ENCODE measurements at regions of chr3 and their contacts with region 1.

Region 1: GRCh38 chr3:148861277-148861869 is 3.7 kb upstream of the CPA3 start:
- DNase-seq: no peak
- H3K4me3 Mint-ChIP-seq: no peak overlapping the region
- H3K27ac Mint-ChIP-seq: no peak overlapping the region
- H3K4me1 Mint-ChIP-seq: no peaks in the 10 kb centered on the region
- H3K27me3 Mint-ChIP-seq: peaks cover 19% of the 10 kb centered on the region

Region 2: DNA sequence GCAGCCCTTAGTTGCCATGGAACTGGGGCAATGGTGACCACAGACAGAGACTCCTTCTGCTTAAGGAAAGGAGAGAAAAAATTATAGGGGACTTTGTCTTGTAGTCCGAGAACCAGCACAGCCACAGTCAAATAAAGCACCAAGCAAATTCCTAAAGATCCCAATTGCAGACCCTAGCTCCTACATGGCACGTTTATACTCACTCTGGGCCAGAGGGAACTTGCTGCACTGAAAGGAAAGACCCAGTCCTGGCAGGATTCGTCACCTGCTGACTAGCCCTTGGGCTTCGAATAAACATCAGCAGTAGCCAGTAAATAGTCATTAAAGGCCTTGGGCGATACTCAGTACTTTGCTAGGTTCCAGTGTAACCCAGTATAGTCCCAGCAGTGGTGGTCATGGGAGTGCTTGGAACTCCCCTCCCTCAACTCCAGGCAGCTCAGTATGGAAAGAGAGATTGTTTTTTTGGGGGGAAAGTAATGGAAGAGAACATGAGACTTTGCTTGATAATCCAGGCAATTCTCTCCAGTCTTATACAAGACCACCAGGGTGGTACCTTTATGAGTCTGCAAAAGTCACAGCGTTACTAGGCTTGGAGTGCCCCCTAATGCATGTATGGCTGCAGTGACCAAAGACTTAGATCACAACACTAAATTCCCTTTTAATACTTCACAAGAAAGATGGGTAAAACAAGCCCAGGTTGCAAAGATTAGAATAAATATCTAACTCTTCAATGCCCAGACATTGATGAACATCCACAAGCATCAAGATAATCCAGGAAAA is 230.1 kb before region 1 on chr3:
- CTCF ChIA-PET with region 1: no interaction called
- DNase-seq: no peak
- H3K4me3 Mint-ChIP-seq: no peak overlapping the region
- H3K27ac Mint-ChIP-seq: no peak overlapping the region
- H3K4me1 Mint-ChIP-seq: no peaks in the 10 kb centered on the region
- H3K27me3 Mint-ChIP-seq: no peaks in the 10 kb centered on the region

Region 3: DNA sequence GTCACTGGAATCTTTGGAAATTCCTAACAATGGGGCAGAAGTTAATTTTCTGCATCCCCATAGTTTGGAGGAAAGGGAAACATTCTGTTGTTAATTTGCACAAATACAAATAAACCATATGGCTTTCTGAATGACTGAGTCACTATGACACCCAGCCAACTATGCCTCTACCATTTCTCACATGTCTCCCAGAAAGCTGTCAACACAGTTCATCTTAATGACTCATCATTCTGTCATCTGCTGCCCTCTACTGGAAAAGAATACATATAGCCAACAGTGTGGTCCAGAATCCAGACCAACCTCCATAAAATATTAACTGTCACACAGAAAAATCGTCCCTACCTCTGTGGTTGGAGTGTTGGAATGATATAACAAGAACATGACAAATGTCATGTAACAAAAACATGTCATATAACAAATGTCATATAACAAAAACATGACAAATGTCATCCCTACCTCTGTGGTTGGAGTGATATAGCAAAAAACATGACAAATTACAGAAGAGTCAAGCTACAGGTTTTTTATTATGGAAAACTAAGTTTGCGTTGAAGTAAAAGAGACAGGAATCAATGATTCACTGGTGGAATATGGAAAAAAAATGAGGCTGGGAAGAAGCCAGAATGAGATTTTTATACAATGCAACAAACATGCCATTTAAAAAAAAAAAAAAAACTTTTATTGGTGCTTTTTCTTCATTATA is 82.3 kb after region 1 on chr3:
- CTCF ChIA-PET with region 1: interaction called, 83 read pairs
- DNase-seq: no peak
- H3K4me3 Mint-ChIP-seq: no peak overlapping the region
- H3K27ac Mint-ChIP-seq: no peak overlapping the region
- H3K4me1 Mint-ChIP-seq: peaks cover 4% of the 10 kb centered on the region
- H3K27me3 Mint-ChIP-seq: peaks cover 26% of the 10 kb centered on the region